A673 (cell line): ENCODE measurements at regions of chr10 and their contacts with region 1.

Region 1: GRCh38 chr10:17756557-17757217 is 4.7 kb downstream of the TMEM236 start:
- DNase-seq: no peak
- H3K4me3 ChIP-seq: no peak overlapping the region
- H3K27ac ChIP-seq: no peak overlapping the region
- H3K4me1 ChIP-seq: peaks cover 4% of the 10 kb centered on the region
- H3K27me3 ChIP-seq: no peaks in the 10 kb centered on the region
- CTCF ChIP-seq: no peak

Region 2: GRCh38 chr10:17548770-17549169 is 207.9 kb before region 1 on chr10:
- CTCF ChIA-PET with region 1: no interaction called
- POLR2A ChIA-PET with region 1: interaction called, 13 read pairs
- intact Hi-C with region 1: no loop called
- DNase-seq: no peak
- H3K4me3 ChIP-seq: no peak overlapping the region
- H3K27ac ChIP-seq: no peak overlapping the region
- H3K4me1 ChIP-seq: no peaks in the 10 kb centered on the region
- H3K27me3 ChIP-seq: no peaks in the 10 kb centered on the region
- CTCF ChIP-seq: no peak